Activated naive CD4-positive, alpha-beta T cell treated with anti-CD3 and anti-CD28 coated beads for 36 hours (primary cell): ENCODE measurements at regions of chr16 and their contacts with region 1.

Region 1: DNA sequence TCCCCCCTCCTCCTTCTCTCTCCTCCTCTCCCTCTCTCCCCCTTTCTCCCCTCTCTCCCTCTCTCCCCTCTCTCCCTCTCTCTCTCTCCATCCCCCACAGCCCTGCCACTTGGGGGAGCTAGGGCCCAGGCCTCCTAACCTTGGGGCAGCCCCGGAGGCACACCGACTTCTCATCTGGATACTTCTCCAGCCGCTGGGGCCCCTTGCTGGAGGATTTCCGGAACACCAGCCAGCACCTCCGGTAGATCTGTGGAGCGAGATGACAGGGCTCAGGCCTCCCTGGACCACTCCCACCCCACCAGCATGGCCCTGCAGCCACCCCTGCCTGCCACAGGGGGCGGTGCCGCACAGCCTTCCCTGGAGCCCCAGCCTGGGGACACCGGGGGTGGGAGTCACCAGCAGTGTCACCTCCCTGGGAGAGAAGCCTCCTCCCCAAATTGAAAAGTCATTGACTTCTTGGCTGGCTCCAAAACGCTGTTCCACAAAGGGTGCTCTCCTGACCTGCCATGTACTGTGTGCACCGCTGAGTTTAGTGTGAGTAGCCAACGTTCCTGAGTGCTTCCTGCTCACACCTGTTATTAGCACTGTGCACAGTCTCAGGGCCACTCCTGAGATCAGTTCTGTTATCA is 10.5 kb downstream of the DOK4 start:
- DNase-seq: peak; percentile 96
- H3K4me3 Mint-ChIP-seq: no peak overlapping the region
- H3K27ac Mint-ChIP-seq: peak overlapping the region; percentile 63
- H3K4me1 Mint-ChIP-seq: peaks cover 22% of the 10 kb centered on the region
- H3K27me3 Mint-ChIP-seq: no peaks in the 10 kb centered on the region

Region 2: DNA sequence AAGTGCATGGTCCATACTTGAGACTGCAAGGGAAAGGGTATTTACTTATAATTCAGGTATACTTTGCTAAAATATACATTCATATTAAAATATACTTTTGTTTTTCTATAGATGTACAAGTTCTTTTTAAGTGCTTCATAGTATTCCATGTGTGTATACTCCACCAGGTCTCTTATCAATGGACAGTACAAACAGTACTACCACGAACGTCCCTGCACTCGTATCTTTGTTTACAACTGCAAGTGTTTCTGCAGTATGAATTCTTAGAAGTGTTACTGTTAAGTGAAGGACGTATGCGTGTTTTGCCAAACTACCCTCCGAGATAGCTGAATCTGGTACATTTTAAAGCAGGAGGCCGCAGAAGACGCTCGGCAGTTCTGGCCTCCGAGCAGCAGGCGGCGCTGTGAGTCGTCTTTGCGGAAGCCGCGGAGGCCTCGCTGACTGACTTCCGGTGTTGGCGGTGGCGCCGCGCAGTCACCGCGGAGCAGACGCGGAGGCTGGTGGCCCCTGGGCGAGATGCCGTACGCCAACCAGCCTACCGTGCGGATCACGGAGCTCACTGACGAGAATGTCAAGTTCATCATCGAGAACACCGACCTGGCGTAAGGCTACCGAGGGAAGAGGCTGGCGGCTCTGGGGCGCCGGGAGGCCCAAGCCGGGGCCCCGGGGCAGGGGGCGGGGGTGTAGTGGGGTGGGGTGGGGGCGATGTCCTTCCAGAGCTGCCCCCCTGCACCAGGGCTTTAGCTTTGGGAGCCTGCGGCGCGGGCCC is 13.4 kb before region 1 on chr16 and contains the start of gene POLR2C:
- CTCF ChIA-PET with region 1: interaction called, 37 read pairs
- intact Hi-C with region 1: no loop called
- DNase-seq: peak; percentile 95
- H3K4me3 Mint-ChIP-seq: peak within 1 kb of the TSS; percentile 100
- H3K27ac Mint-ChIP-seq: peak within 1 kb of the TSS; percentile 99
- H3K4me1 Mint-ChIP-seq: peaks cover 30% of the 10 kb centered on the region
- H3K27me3 Mint-ChIP-seq: no peaks in the 10 kb centered on the region
- total RNA-seq, gene POLR2C: 49.4 to 53.0 TPM

Region 3: DNA sequence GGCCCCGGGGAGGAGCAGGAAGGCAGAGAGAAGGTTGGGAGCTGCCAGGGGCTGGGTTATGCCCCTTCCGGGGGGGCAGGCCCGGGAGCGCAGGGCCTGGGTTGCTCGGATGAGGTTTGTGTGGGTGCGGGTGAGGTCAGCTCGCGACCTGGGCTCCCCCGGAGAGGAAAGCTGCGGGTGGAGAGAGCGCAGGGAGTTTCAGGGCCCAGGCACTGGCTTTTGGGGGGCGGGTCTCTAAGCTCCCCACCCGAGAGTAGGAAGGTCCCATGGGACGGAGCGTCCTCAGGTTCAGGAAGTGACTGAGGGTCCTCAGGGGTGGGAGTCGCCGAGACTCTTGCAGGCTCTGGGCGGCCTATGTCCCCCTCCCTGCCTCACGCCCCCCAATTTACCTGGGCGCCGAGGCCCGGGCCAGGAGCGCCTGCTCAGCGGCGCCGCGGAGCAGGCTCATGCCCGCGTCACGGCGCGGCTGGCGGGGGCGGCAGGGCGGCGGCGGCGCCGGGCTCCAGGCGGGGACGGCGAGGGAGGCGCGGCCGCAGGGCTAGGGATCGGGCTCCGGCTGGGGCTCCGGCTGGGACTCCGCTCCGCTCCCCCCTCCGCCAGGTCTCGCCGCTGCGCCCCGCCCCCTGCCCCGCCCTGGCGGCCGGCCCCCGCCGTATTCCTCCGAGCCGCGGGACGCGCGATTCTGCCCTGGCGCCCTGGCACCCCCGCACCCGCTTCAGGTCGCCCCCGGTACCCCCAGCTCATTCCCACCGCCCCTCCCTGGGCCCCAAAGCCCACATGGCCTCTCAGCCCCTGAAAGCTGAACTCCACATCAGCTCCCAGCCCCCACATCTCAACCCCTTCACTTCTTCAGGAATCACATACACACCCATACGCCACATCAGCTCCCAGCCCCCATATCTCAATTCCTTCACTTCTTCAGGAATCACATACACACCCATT is 10.4 kb after region 1 on chr16 and contains the start of gene DOK4:
- CTCF ChIA-PET with region 1: interaction called, 6 read pairs
- intact Hi-C with region 1: loop called (anchors 1 kb)
- DNase-seq: peak; percentile 79
- H3K4me3 Mint-ChIP-seq: peak within 1 kb of the TSS; percentile 77
- H3K27ac Mint-ChIP-seq: peak within 1 kb of the TSS; percentile 63
- H3K4me1 Mint-ChIP-seq: peaks cover 18% of the 10 kb centered on the region
- H3K27me3 Mint-ChIP-seq: no peaks in the 10 kb centered on the region
- total RNA-seq, gene DOK4: 5.0 to 6.2 TPM

Region 4: DNA sequence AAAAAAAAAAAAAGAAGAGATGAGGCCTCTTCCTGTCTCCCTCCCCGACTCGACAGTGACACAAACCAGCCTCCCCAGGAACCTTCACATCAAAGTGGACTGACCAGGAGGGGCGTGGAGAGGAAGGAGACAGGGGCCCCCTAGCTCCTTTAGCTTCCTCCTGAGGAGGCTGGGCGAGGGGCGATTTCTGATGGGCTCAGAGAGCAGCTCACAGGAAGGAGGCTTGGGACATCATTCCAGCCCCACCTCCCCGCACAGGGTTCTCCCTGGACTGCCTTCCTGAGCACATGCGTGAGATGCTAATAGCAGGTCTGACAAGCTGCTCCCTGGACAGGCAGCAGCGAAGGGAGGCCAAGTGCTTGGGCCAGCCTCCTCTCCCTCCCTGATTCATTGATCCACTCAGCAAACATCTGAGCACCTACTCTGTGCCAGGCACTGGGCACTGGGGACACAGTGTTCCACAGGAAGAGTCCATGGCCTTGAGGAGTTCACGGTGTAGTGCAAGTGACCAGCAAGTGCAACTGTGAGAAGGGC is 24.8 kb after region 1 on chr16:
- CTCF ChIA-PET with region 1: interaction called, 3 read pairs
- intact Hi-C with region 1: loop called (anchors 2 kb)
- DNase-seq: peak; percentile 72
- H3K4me3 Mint-ChIP-seq: no peak overlapping the region
- H3K27ac Mint-ChIP-seq: no peak overlapping the region
- H3K4me1 Mint-ChIP-seq: peaks cover 14% of the 10 kb centered on the region
- H3K27me3 Mint-ChIP-seq: no peaks in the 10 kb centered on the region

Region 5: GRCh38 chr16:57519796-57520360 is 44.1 kb after region 1 on chr16:
- CTCF ChIA-PET with region 1: interaction called, 71 read pairs
- intact Hi-C with region 1: loop called (anchors 1 kb)
- DNase-seq: peak; percentile 87
- H3K4me3 Mint-ChIP-seq: no peak overlapping the region
- H3K27ac Mint-ChIP-seq: peak overlapping the region; percentile 73
- H3K4me1 Mint-ChIP-seq: peaks cover 4% of the 10 kb centered on the region
- H3K27me3 Mint-ChIP-seq: no peaks in the 10 kb centered on the region

Region 6: DNA sequence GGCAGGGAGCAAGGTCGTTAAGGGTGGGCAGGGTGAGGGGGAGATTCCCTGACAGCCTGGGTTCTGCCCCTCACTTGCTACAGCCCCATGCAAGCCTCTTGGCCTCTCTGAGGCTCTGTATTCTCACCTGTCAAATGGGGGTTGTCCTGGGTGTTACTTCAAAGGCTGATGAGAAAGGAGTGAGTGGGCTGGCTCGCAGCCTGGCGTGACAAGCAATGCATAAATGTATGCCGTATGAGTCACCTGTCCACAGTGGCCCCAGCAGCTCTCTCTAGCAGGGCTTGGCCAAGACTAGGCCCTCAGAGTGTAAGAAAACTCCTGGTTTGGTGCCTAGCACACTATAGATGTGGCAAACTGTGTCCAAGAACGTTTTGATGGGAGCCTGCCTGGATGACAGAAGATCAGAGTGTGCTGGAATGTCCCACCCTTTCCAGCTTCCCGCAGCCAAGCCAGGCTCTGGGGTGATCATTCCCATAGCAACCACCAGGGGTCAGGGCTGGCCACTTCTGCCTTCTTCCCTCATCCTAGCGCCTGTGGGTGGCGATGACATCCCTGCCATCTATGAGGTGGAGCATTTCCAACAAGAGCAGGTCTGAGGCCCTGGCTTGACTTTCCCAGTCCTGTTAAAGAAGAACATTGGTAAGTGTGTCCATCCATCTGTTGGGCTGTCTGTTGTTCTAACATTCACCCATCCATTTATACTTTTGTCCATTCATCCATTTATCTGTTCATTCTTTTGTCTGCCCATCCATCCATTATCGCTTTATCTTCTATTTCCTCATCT is 115.5 kb after region 1 on chr16:
- CTCF ChIA-PET with region 1: no interaction called
- intact Hi-C with region 1: loop called (anchors 2 kb)
- DNase-seq: peak; percentile 89
- H3K4me3 Mint-ChIP-seq: peak overlapping the region; percentile 40
- H3K27ac Mint-ChIP-seq: peak overlapping the region; percentile 90
- H3K4me1 Mint-ChIP-seq: peaks cover 32% of the 10 kb centered on the region
- H3K27me3 Mint-ChIP-seq: no peaks in the 10 kb centered on the region

Region 7: GRCh38 chr16:57648590-57649442 is 173.0 kb after region 1 on chr16:
- CTCF ChIA-PET with region 1: no interaction called
- intact Hi-C with region 1: loop called (anchors 1 kb)
- DNase-seq: peak; percentile 93
- H3K4me3 Mint-ChIP-seq: no peak overlapping the region
- H3K27ac Mint-ChIP-seq: peak overlapping the region; percentile 44
- H3K4me1 Mint-ChIP-seq: peaks cover 17% of the 10 kb centered on the region
- H3K27me3 Mint-ChIP-seq: no peaks in the 10 kb centered on the region